ENCODE measurements at regions of chr17 and their contacts with region 1.

Region 1: DNA sequence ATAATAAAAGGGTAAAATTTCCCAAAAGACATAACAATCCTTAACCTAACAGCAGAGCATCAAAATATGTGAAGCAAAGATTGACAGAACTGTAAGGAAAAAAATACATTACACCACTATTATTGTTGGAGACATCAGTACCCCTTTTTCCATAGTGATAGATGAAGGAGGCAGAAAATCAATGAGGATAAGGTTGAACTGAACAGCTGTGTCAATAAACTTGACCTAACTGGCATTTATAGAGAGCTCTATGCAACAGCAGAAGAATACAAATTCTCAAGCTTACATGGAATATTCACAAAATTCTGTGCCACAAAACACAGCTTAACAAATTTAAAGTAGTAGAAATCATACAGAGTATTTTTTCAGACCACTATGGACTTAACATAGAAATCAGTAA is 195.0 kb upstream of the ELAC2 start:
- DNase-seq: no peak
- ATAC-seq: no peak
- H3K4me3 Mint-ChIP-seq: no peak overlapping the region
- H3K27ac Mint-ChIP-seq: no peak overlapping the region
- H3K4me1 Mint-ChIP-seq: no peaks in the 10 kb centered on the region
- H3K27me3 Mint-ChIP-seq: no peaks in the 10 kb centered on the region
- CTCF ChIP-seq: no peak

Region 2: GRCh38 chr17:13153036-13153435 is 59.8 kb before region 1 on chr17:
- CTCF ChIA-PET with region 1: no interaction called
- POLR2A ChIA-PET with region 1: no interaction called
- intact Hi-C with region 1: loop called (anchors 10 kb)
- DNase-seq: no peak
- ATAC-seq: no peak
- H3K4me3 Mint-ChIP-seq: no peak overlapping the region
- H3K27ac Mint-ChIP-seq: no peak overlapping the region
- H3K4me1 Mint-ChIP-seq: no peaks in the 10 kb centered on the region
- H3K27me3 Mint-ChIP-seq: no peaks in the 10 kb centered on the region
- CTCF ChIP-seq: no peak

Region 3: DNA sequence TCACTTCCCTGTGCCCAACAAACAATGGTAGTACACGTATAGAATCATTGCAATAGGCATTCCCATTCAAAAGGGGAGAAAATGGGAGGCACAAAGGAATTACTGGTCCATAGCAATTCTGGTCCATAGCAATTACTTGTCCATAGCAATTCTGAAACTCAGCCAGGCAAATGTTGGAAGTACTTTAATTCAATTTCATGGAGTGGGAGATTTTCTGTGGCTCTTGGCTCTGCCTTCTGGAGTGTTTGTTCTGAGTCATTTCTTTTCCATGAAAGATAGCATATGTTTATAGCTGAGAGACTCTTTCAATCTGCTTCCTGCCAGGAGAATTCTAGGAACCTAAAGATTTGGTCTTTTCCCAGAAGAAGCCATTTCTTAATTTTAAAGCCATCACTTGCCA is 12.2 kb before region 1 on chr17:
- CTCF ChIA-PET with region 1: no interaction called
- POLR2A ChIA-PET with region 1: no interaction called
- intact Hi-C with region 1: no loop called
- DNase-seq: no peak
- ATAC-seq: no peak
- H3K4me3 Mint-ChIP-seq: no peak overlapping the region
- H3K27ac Mint-ChIP-seq: no peak overlapping the region
- H3K4me1 Mint-ChIP-seq: no peaks in the 10 kb centered on the region
- H3K27me3 Mint-ChIP-seq: no peaks in the 10 kb centered on the region
- CTCF ChIP-seq: no peak

Measured in activated B cell treated with CpG ODN at 0.5 μM for 24 hours (primary cell).